Heart right ventricle (tissue), 16 donors: ENCODE measurements at regions of chr7 and their contacts with region 1.

Region 1: DNA sequence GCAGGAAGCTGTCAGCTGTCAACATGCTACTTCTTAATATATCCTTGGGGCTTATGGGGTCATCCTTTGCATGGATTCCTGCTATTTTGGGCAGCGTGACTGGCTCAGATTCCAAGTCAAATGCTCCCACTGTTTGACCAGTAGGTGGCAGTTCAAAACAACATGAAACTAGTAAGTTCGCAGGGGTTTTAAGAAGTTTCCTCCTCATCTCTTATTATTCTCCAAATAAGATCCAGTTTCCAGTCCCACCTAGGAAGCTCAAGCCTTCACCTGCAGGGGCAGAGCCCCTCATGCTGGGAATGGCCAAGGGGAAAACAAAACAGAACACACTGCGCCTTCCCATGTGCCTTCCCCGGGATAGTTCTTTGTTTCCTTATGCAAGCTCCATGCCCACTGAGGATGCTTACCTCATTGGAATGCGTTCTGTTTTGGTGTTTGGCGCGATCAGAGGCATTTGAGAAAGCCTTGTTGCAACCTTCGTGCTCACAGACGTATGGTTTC is 259.8 kb downstream of the GLI3 start:
- DNase-seq: peak in 1 of 2 donors; percentile 46
- ATAC-seq: peak; percentile 56 to 84 (median 73)
- H3K4me3 ChIP-seq: no peak overlapping the region
- H3K27ac ChIP-seq: no peak overlapping the region
- H3K4me1 ChIP-seq: peaks cover 0 to 32% (median 4%) of the 10 kb centered on the region in 9 donors
- H3K27me3 ChIP-seq: no peaks in the 10 kb centered on the region
- CTCF ChIP-seq: peak; percentile 36 to 84 (median 70)

Region 2: GRCh38 chr7:42237162-42237821 is 260.1 kb after region 1 on chr7 and contains the start of gene GLI3:
- intact Hi-C with region 1: loop called in 3 of 10 experiments (anchors 5 to 10 kb)
- DNase-seq: peak; percentile 83 to 90
- ATAC-seq: peak; percentile 80 to 94 (median 89)
- H3K4me3 ChIP-seq: peak within 1 kb of the TSS; percentile 47 to 84 (median 76)
- H3K27ac ChIP-seq: peak within 1 kb of the TSS; percentile 71 to 87 (median 82)
- H3K4me1 ChIP-seq: peaks cover 0 to 19% (median 11%) of the 10 kb centered on the region in 9 donors
- H3K27me3 ChIP-seq: peaks cover 0 to 66% (median 0%) of the 10 kb centered on the region in 7 donors
- CTCF ChIP-seq: peak in 6 of 9 donors; percentile 6 to 50 (median 28)
- total RNA-seq, gene GLI3: 2.7 to 9.1 (median 5.5) TPM

Region 3: DNA sequence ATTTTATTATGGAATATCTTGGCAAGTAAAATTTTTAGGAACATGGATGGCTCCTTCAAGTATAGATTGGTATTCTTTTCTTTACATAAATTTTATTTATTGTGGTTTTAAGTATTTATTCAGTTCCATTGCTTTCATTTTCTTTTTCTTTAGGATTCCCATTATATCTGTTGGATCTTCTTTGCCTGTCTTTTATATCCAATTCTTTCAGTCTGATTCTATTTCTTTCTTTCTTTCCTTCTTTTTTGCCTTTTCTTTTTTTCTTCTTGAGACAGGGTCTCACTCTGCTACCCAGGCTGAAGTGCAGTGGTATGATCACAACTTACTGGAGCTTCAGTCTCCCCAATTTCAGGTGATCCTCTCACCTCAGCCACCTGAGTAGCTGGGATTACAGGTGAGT is 334.0 kb after region 1 on chr7:
- intact Hi-C with region 1: loop called in 4 of 10 experiments (anchors 10 kb)
- DNase-seq: no peak
- ATAC-seq: no peak
- H3K4me3 ChIP-seq: no peak overlapping the region
- H3K27ac ChIP-seq: no peak overlapping the region
- H3K4me1 ChIP-seq: peaks cover 0 to 6% (median 0%) of the 10 kb centered on the region in 9 donors
- H3K27me3 ChIP-seq: peaks cover 0 to 4% (median 0%) of the 10 kb centered on the region in 7 donors
- CTCF ChIP-seq: no peak

Region 4: GRCh38 chr7:42574685-42575084 is 597.5 kb after region 1 on chr7:
- intact Hi-C with region 1: loop called in 1 of 10 experiments (anchors 10 kb)
- DNase-seq: no peak
- ATAC-seq: no peak
- H3K4me3 ChIP-seq: no peak overlapping the region
- H3K27ac ChIP-seq: no peak overlapping the region
- H3K4me1 ChIP-seq: no peaks in the 10 kb centered on the region
- H3K27me3 ChIP-seq: peaks cover 0 to 5% (median 0%) of the 10 kb centered on the region in 7 donors
- CTCF ChIP-seq: peak in 4 of 9 donors; percentile 7 to 26 (median 13)

Region 5: DNA sequence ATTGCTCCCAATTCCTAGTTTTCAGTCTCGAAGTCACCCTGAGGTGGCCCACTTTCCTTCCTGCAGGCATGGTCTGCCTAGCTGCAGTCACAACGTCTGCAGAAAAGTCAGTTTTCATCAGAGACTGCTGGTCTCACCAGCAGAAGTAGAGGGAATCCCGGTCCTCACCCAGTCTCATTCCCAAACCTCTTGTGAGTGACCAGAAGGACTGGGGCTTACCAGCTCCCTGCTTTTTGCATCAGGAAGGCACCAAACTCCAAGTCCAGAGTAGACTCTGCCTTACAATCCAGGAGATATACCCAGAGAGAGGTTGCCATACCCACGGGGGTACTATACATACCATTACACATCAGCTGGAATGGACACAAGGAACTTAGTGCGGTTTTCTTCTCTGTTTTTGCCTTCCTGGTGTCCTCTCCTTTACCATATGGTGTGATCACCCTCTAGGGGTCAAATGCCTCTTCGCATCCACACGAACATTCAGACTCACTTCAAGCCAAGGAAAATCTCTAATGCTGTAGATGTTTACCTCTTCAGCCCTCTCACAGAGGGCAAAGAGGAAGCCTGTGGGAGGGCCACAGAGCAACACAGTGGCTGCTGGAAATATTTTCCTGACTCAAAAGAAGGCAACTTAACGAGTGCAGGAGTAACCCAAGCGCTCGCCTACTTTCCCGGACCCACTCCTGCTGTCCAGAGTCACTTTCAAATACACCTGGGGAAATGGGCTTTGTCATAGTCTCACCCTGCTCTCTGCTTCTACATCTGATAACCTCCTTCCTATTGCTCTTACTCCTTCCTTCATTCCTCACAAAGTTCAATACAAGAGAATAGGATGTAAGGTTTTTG is 713.8 kb after region 1 on chr7:
- intact Hi-C with region 1: loop called in 4 of 10 experiments (anchors 10 kb)
- DNase-seq: no peak
- ATAC-seq: peak in 7 of 8 donors; percentile 14 to 71 (median 41)
- H3K4me3 ChIP-seq: no peak overlapping the region
- H3K27ac ChIP-seq: no peak overlapping the region
- H3K4me1 ChIP-seq: peaks cover 0 to 16% (median 0%) of the 10 kb centered on the region in 9 donors
- H3K27me3 ChIP-seq: peaks cover 0 to 5% (median 0%) of the 10 kb centered on the region in 7 donors
- CTCF ChIP-seq: peak in 8 of 9 donors; percentile 9 to 52 (median 43)

Region 6: DNA sequence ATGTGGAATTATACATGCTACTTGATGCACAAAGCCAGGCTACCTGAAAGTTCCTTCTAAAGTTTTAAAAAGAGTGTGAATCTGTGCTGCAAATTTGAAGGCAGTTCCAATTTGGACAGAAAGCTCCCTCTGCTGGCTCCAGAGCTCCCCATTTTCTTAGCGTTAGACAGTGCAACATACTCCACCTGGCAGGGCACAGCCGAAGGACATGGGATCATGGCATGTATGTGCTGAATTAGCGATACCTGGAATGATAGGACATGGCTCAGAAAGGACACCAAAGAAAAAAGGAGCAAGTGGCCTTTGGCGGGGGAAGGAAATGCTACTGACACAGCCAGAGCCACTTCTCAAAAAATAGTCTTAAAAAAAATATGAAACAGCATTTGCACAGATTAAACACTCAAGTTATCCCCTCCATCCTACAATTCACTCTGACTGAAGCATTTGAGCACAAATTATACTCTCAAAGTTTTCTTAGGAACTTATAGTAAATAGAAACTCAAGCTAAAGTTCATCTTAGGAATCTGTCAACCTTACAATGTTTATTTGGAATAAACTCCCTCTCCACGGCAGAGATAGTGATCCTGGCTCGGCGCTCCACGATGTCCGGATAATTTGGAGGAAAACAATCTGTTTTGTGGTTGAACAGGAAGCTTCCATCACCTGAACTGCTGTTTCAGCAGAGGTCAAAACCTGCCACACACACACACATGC is 854.7 kb after region 1 on chr7:
- intact Hi-C with region 1: loop called in 6 of 10 experiments (anchors 2 to 10 kb)
- DNase-seq: peak; percentile 14 to 49
- ATAC-seq: peak; percentile 59 to 85 (median 72)
- H3K4me3 ChIP-seq: no peak overlapping the region
- H3K27ac ChIP-seq: no peak overlapping the region
- H3K4me1 ChIP-seq: peaks cover 0 to 14% (median 0%) of the 10 kb centered on the region in 9 donors
- H3K27me3 ChIP-seq: no peaks in the 10 kb centered on the region
- CTCF ChIP-seq: peak; percentile 44 to 79 (median 61)